ENCODE measurements at regions of chr11 and their contacts with region 1.

Region 1: GRCh38 chr11:62831520-62832335 is at the start of gene STX5:
- DNase-seq: peak; percentile 100
- ATAC-seq: peak; percentile 95
- H3K4me3 ChIP-seq: peak within 1 kb of the TSS; percentile 69 to 96 (median 92)
- H3K4me3 Mint-ChIP-seq: peak within 1 kb of the TSS; percentile 92
- H3K27ac ChIP-seq: peak within 1 kb of the TSS; percentile 96 to 99
- H3K27ac Mint-ChIP-seq: peak within 1 kb of the TSS; percentile 97
- H3K4me1 ChIP-seq: peaks cover 16 to 30% of the 10 kb centered on the region in 2 donors
- H3K4me1 Mint-ChIP-seq: peaks cover 43% of the 10 kb centered on the region
- H3K27me3 ChIP-seq: no peaks in the 10 kb centered on the region
- H3K27me3 Mint-ChIP-seq: no peaks in the 10 kb centered on the region
- CTCF ChIP-seq: no peak
- total RNA-seq, gene STX5: 98.1 and 99.1 TPM in 2 replicates

Region 2: DNA sequence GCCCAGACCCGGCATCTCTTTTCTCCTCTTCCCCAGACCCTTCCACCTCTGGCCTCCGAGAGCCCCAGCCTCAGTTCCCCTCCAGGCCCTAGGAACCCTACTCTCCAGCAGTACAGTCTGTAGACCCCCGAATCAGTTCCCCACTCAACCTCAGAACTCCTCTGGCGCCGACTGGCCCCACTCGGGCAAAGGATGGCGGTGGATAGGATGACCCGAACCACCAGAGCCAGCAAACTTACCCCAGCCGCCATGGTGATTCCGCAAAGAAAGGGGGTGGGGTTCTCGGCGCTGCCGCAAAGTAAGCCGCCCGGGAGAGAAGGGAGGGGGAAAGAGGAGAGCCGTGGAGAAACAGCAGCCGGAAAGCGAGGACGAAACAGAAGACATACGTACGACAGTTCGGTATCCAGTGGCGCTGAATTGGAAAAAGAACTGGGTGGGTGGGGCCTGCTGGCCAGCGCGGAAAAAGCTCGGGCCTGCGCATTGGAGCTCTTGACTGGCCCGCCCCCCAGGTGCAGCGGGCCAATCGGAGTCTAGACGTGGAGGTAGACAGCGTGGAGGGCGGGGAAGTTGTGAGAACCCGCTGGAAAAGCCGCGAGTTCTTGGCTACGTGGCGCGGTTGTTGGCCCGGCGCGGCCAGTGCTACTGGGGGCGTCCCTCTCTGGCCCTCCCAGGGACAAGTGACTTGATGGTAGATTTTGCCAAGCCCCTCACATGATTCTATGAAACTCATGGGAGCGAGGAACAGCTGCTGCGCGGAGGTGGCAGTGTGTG is 258.0 kb before region 1 on chr11 and contains the start of gene EEF1G:
- CTCF ChIA-PET with region 1: no interaction called
- POLR2A ChIA-PET with region 1: no interaction called
- intact Hi-C with region 1: loop called (anchors 1 kb)
- DNase-seq: peak; percentile 99
- ATAC-seq: peak; percentile 93
- H3K4me3 ChIP-seq: peak within 1 kb of the TSS; percentile 74 to 99 (median 80)
- H3K4me3 Mint-ChIP-seq: peak within 1 kb of the TSS; percentile 92
- H3K27ac ChIP-seq: peak within 1 kb of the TSS; percentile 84 to 88
- H3K27ac Mint-ChIP-seq: peak within 1 kb of the TSS; percentile 95
- H3K4me1 ChIP-seq: peaks cover 12 to 25% of the 10 kb centered on the region in 2 donors
- H3K4me1 Mint-ChIP-seq: peaks cover 50% of the 10 kb centered on the region
- H3K27me3 ChIP-seq: no peaks in the 10 kb centered on the region
- H3K27me3 Mint-ChIP-seq: no peaks in the 10 kb centered on the region
- CTCF ChIP-seq: no peak
- total RNA-seq, gene EEF1G: 1,778 and 1,867 TPM in 2 replicates

Region 3: DNA sequence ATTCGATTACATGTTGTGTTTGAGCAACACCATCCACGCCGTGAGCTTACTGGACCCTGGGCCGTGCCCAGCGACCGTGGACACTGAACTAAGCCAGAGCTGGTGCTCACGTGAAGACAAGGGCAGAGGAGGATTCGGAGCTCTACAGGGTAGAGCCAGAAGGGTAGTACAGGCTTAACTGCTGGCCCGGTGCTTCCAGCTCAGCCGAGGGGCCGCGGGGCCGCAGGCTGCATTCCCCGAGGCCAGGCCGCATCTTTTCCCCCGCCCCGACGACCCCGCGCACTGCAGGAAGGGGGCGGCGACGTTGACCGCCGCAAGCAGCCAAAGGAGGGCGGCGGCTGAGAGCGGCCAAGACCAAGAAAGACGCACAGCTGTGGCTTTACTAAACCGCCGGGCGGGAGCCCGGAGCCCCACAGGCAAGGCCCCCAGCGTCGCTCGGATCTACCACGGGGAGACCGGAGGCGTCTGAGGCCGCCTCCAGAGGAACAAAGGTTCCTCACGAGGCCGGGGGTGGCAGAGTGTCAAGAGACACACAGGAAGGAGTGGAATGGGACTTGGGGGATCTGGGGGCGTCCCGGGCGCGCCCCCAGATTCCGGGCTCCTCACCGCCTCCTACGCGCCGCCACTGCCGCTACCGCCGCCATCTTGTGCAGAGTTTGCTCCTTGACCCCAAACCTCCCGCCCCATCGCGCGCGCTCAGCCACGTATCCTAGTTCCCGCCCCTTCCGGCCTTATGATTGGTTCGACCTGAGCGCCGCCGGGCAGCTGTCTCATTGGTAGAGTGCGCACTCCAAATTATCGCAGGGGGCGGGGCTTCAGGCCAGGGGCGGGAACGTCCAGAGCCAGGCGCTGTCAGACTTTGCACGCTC is 185.5 kb before region 1 on chr11 and contains the start of gene GANAB:
- CTCF ChIA-PET with region 1: no interaction called
- POLR2A ChIA-PET with region 1: no interaction called
- intact Hi-C with region 1: loop called (anchors 1 kb)
- DNase-seq: peak; percentile 97
- ATAC-seq: peak; percentile 99
- H3K4me3 ChIP-seq: peak within 1 kb of the TSS; percentile 54 to 98 (median 90)
- H3K4me3 Mint-ChIP-seq: peak within 1 kb of the TSS; percentile 97
- H3K27ac ChIP-seq: peak within 1 kb of the TSS; percentile 75 to 89
- H3K27ac Mint-ChIP-seq: peak within 1 kb of the TSS; percentile 95
- H3K4me1 ChIP-seq: peaks cover 14 to 21% of the 10 kb centered on the region in 2 donors
- H3K4me1 Mint-ChIP-seq: peaks cover 26% of the 10 kb centered on the region
- H3K27me3 ChIP-seq: no peaks in the 10 kb centered on the region
- H3K27me3 Mint-ChIP-seq: no peaks in the 10 kb centered on the region
- CTCF ChIP-seq: no peak
- total RNA-seq, gene GANAB: 190 and 204 TPM in 2 replicates

Region 4: DNA sequence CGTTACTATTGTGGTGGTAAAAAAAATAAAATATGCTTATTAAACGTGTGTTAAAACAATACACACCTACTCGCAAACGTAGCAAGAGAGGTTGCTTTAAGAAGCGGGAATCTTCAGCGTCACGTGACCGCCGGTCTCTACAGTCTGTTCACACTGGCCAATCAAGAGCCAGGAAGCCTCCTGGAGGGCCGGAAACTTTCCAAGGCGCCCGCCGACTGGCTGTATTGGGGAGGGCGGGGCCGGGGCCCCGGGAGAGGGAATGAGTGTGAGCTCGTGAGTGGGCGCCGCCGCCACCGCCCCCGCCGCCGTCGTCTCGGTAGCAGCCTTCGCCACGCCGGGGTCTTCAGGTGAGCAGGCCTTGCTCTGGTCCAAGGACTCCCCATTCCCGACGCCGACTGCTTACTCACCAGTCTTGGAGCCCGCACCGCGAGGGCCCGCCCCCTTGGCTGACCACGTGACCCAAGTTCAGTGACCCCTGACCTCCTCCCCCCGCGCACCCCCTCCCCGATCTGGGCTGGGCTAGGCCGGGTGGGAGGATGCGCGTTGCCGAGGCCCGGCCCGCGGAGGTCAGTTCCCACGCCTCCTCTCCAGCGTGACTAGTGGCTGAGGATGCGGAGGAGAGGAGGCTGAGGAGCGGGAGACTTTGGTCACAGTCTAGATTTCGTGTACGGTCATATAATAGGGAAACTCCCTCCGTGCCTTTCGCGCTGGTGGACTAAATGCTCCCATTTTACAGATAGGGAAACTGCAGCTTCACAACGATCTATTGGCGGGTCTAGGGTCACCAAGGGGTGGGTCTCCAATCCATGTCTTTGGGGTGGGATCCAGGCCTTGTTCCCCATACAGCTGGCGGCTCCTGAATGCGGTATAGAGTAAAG is 60.3 kb before region 1 on chr11 and contains the start of gene TAF6L:
- CTCF ChIA-PET with region 1: no interaction called
- POLR2A ChIA-PET with region 1: no interaction called
- intact Hi-C with region 1: loop called (anchors 1 kb)
- DNase-seq: peak; percentile 88
- ATAC-seq: peak; percentile 90
- H3K4me3 ChIP-seq: peak within 1 kb of the TSS; percentile 58 to 97 (median 68)
- H3K4me3 Mint-ChIP-seq: peak within 1 kb of the TSS; percentile 95
- H3K27ac ChIP-seq: peak within 1 kb of the TSS; percentile 63 to 84
- H3K27ac Mint-ChIP-seq: peak within 1 kb of the TSS; percentile 96
- H3K4me1 ChIP-seq: peaks cover 15 to 23% of the 10 kb centered on the region in 2 donors
- H3K4me1 Mint-ChIP-seq: peaks cover 26% of the 10 kb centered on the region
- H3K27me3 ChIP-seq: no peaks in the 10 kb centered on the region
- H3K27me3 Mint-ChIP-seq: no peaks in the 10 kb centered on the region
- CTCF ChIP-seq: no peak
- total RNA-seq, gene TAF6L: 43.2 and 48.2 TPM in 2 replicates

Region 5: GRCh38 chr11:62805076-62805892 is 26.4 kb before region 1 on chr11 and contains the start of gene NXF1:
- CTCF ChIA-PET with region 1: interaction called, 3 read pairs
- POLR2A ChIA-PET with region 1: interaction called, 24 read pairs
- intact Hi-C with region 1: loop called (anchors 1 kb)
- DNase-seq: peak; percentile 98
- ATAC-seq: peak; percentile 87
- H3K4me3 ChIP-seq: peak within 1 kb of the TSS; percentile 77 to 96 (median 89)
- H3K4me3 Mint-ChIP-seq: peak within 1 kb of the TSS; percentile 100
- H3K27ac ChIP-seq: peak within 1 kb of the TSS; percentile 69 to 86
- H3K27ac Mint-ChIP-seq: peak within 1 kb of the TSS; percentile 99
- H3K4me1 ChIP-seq: peaks cover 11 to 25% of the 10 kb centered on the region in 2 donors
- H3K4me1 Mint-ChIP-seq: peaks cover 32% of the 10 kb centered on the region
- H3K27me3 ChIP-seq: no peaks in the 10 kb centered on the region
- H3K27me3 Mint-ChIP-seq: no peaks in the 10 kb centered on the region
- CTCF ChIP-seq: peak; percentile 22
- total RNA-seq, gene NXF1: 161 TPM in 2 replicates

Region 6: DNA sequence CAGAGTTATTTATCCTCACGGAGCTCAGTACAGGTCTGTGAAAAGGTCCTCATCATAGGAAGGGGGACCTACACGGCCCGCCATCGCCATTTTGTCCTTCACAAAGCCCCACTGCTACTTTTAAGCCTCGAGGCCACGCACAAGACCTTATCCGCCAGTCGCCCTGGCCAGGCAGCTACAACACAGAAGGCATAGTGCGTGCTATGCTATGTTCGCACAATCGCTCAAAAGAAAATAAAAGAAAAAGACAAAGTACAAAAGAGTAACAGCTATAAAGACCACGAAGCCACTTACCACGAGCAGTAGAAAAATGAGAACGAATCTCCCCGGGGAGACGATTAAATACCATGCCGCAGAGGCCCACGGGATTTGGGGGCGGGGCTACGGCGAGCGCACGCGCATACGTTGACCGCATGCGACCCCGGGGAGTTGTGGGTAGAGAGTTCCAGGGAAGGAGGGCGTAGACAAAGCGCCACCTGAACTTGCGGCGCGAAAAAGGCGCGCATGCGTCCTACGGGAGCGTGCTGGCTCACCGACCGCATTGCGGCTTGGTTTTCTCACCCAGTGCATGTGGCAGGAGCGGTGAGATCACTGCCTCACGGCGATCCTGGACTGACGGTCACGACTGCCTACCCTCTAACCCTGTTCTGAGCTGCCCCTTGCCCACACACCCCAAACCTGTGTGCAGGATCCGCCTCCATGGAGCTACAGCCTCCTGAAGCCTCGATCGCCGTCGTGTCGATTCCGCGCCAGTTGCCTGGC is 24.0 kb after region 1 on chr11:
- CTCF ChIA-PET with region 1: interaction called, 7 read pairs
- POLR2A ChIA-PET with region 1: interaction called, 16 read pairs
- intact Hi-C with region 1: loop called (anchors 1 kb)
- DNase-seq: peak; percentile 99
- ATAC-seq: peak; percentile 92
- H3K4me3 ChIP-seq: peak overlapping the region; percentile 68 to 100 (median 99)
- H3K4me3 Mint-ChIP-seq: peak overlapping the region; percentile 99
- H3K27ac ChIP-seq: peak overlapping the region; percentile 65 to 84
- H3K27ac Mint-ChIP-seq: peak overlapping the region; percentile 98
- H3K4me1 ChIP-seq: peaks cover 39 to 58% of the 10 kb centered on the region in 2 donors
- H3K4me1 Mint-ChIP-seq: peaks cover 60% of the 10 kb centered on the region
- H3K27me3 ChIP-seq: no peaks in the 10 kb centered on the region
- H3K27me3 Mint-ChIP-seq: no peaks in the 10 kb centered on the region
- CTCF ChIP-seq: no peak

Region 7: DNA sequence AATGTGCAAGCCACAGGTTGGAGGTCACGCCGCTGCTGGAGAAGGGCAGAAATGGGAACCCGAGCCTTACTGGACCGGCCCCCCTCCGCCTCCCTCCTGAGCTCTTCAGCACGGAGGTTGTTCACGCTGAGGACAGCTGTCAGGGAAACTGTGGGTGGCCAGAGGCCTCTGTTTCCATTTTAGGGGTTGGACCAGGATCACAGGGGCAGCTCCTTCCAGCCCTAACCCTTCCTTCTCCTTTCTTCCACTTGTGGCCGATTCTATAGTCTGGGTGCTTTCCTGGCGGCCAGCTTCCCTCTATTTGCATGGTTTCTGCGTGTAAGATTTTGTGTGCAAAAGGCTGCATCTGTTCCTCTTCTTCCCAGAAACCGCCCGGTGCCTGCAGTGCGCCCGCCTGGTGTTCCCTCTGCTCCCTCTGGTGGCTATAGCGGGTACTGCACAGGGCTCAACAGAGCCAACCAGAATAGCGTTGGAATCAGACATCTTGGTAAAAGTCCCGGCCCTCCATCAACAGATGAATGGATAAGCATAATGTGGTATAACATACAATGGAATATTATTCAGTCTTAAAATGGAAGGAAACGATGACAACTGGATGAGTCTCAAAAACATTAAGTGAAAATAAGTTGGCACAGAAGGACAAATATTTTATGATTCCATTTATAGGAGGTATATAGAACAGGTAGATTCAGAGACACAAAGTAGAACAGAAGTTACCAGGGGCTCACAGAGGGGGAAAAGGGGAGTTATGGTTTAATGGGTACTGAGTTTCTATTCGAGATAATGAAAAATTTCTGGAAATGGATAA is 192.3 kb after region 1 on chr11:
- CTCF ChIA-PET with region 1: no interaction called
- POLR2A ChIA-PET with region 1: no interaction called
- intact Hi-C with region 1: no loop called
- DNase-seq: peak; percentile 82
- ATAC-seq: peak; percentile 90
- H3K4me3 ChIP-seq: no peak overlapping the region
- H3K4me3 Mint-ChIP-seq: no peak overlapping the region
- H3K27ac ChIP-seq: no peak overlapping the region
- H3K27ac Mint-ChIP-seq: no peak overlapping the region
- H3K4me1 ChIP-seq: peaks cover 0 to 3% of the 10 kb centered on the region in 2 donors
- H3K4me1 Mint-ChIP-seq: peaks cover 4% of the 10 kb centered on the region
- H3K27me3 ChIP-seq: peaks cover 0 to 13% (median 0%) of the 10 kb centered on the region in 4 experiments
- H3K27me3 Mint-ChIP-seq: peaks cover 32% of the 10 kb centered on the region
- CTCF ChIP-seq: peak; percentile 100

Region 8: DNA sequence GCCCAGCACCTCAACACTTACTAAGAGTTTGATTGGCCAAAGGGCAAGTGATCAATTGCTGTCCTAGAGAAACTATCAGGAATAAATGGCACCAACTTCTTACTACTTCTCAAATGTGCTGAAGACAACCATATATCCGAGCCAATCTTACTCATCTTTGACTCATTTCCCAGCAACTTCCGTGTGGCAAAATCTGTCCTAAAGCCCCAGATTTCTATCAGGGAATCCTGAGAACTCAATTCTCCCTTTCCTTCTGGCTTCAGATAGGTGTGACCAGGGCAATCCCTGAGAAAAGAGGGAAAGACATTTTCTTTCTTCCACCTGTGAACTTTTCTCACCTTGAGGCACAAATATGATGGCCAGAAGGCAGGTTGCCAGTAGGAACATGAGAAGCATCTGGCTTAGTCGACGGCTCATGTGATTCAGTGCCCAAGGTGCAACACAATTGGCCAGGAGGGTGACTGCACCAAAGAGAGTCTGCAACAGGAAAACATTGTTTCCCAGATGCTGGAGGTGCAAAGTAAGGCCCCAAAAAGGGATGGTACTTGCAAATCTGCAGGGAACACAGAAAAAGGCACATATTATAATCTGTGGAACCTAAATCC is 334.1 kb after region 1 on chr11:
- CTCF ChIA-PET with region 1: no interaction called
- POLR2A ChIA-PET with region 1: no interaction called
- intact Hi-C with region 1: no loop called
- DNase-seq: no peak
- ATAC-seq: no peak
- H3K4me3 ChIP-seq: no peak overlapping the region
- H3K4me3 Mint-ChIP-seq: no peak overlapping the region
- H3K27ac ChIP-seq: no peak overlapping the region
- H3K27ac Mint-ChIP-seq: no peak overlapping the region
- H3K4me1 ChIP-seq: no peaks in the 10 kb centered on the region
- H3K4me1 Mint-ChIP-seq: no peaks in the 10 kb centered on the region
- H3K27me3 ChIP-seq: peaks cover 0 to 20% (median 15%) of the 10 kb centered on the region in 4 experiments
- H3K27me3 Mint-ChIP-seq: peaks cover 54% of the 10 kb centered on the region
- CTCF ChIP-seq: no peak